ENCODE measurements at regions of chr6 and their contacts with region 1.

Region 1: GRCh38 chr6:166989427-166990032 is 9.7 kb upstream of the CEP43 start:
- DNase-seq: peak; percentile 38
- H3K4me3 ChIP-seq: no peak overlapping the region
- H3K27ac ChIP-seq: no peak overlapping the region
- H3K4me1 ChIP-seq: no peaks in the 10 kb centered on the region
- H3K27me3 ChIP-seq: no peaks in the 10 kb centered on the region
- CTCF ChIP-seq: peak; percentile 24 to 34
- POLR2A ChIP-seq: no peak

Region 2: GRCh38 chr6:165478201-165478980 is 1511.1 kb before region 1 on chr6:
- CTCF ChIA-PET with region 1: no interaction called
- POLR2A ChIA-PET with region 1: no interaction called
- dilution Hi-C with region 1: no loop called
- intact Hi-C with region 1: no loop called
- DNase-seq: no peak
- H3K4me3 ChIP-seq: no peak overlapping the region
- H3K27ac ChIP-seq: no peak overlapping the region
- H3K4me1 ChIP-seq: no peaks in the 10 kb centered on the region
- H3K27me3 ChIP-seq: no peaks in the 10 kb centered on the region
- CTCF ChIP-seq: no peak
- POLR2A ChIP-seq: no peak

Region 3: DNA sequence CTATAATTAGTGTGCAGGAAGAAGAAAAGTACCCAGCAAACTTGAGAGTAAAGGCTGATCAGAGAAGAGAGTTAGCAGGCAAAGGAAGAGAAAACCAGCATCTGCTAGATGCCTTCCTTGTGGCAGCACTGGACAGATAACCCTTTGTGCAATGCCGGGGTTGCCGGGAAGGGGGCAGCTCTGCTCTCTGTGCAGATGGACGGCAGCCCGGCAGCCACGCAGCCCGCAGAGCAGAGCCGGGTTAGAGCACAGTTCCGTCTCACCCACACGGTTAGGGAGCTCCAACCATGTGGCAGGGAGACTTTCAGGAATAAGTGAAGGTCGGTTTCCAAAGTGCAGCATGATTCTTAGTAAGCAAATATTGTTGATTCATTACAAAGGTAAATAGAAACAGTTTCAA is 282.5 kb before region 1 on chr6:
- CTCF ChIA-PET with region 1: interaction called, 4 read pairs
- POLR2A ChIA-PET with region 1: no interaction called
- dilution Hi-C with region 1: no loop called
- intact Hi-C with region 1: loop called (anchors 1 kb)
- DNase-seq: peak; percentile 54
- H3K4me3 ChIP-seq: no peak overlapping the region
- H3K27ac ChIP-seq: no peak overlapping the region
- H3K4me1 ChIP-seq: no peaks in the 10 kb centered on the region
- H3K27me3 ChIP-seq: peaks cover 8% of the 10 kb centered on the region in 2 experiments
- CTCF ChIP-seq: peak; percentile 27 to 76
- POLR2A ChIP-seq: no peak

Region 4: DNA sequence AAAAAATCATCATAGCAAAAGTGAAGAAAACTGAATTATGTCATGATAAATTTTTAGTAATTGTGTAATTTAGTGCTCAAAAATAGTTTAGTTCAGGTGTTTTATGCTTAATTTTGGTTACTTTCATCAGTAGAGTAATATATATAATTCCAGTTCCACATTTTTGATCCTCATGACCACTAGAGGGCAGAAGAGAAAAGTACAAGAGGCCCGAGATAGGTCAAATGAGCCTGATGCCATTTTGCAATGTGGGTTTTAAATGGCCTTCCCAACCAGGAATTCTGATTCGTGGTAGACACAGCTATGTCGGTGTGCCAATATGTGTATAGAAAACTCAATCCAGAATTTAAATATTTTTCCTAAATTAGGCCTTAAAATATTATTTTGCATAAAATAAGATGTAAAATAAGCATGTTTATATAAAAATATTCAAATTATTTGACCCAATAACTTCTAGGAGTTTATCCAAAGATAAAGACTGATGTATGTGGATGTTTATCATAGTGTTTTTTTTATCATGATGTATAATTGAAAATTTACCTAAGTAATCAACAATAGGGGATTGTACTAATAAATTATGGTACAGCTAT is 202.7 kb before region 1 on chr6:
- CTCF ChIA-PET with region 1: interaction called, 84 read pairs
- POLR2A ChIA-PET with region 1: no interaction called
- dilution Hi-C with region 1: no loop called
- intact Hi-C with region 1: loop called (anchors 1 kb)
- DNase-seq: peak; percentile 61
- H3K4me3 ChIP-seq: no peak overlapping the region
- H3K27ac ChIP-seq: no peak overlapping the region
- H3K4me1 ChIP-seq: no peaks in the 10 kb centered on the region
- H3K27me3 ChIP-seq: no peaks in the 10 kb centered on the region
- CTCF ChIP-seq: peak; percentile 49 to 50
- POLR2A ChIP-seq: no peak

Region 5: DNA sequence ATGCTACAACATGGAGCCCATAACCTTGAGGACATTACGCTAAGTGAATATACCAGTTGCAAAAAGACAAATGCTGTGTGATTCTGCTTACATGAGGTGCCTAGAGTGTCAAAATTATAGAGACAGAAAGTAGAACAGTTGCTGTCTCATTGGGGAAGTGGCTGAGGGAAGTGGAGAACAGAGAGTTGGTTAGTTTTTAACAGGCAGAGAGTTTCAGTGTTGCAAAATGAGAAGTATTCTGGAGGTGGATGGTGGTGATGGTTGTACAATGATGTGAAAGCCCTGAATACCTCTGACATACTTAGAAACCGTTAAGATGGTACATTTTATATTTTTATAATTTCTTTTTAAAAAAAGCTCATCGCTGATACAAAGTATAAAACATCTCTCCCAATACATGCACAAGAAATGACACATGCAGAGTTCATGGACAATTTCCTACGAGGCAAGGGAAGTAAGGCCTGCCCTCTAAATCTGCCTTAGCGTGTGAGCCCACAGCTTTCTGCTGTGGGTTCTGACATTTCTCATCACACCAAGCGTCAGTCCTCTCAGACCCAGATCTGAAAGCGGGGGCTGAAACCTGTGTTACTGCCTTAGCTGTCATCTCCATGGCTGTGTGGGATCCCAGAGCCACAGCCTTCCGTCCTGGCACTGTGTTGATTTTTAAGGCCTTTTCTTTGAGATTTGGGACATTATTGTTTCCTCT is 159.2 kb before region 1 on chr6:
- CTCF ChIA-PET with region 1: no interaction called
- POLR2A ChIA-PET with region 1: no interaction called
- dilution Hi-C with region 1: no loop called
- intact Hi-C with region 1: no loop called
- DNase-seq: no peak
- H3K4me3 ChIP-seq: no peak overlapping the region
- H3K27ac ChIP-seq: no peak overlapping the region
- H3K4me1 ChIP-seq: no peaks in the 10 kb centered on the region
- H3K27me3 ChIP-seq: no peaks in the 10 kb centered on the region
- CTCF ChIP-seq: no peak
- POLR2A ChIP-seq: no peak

Region 6: GRCh38 chr6:166950443-166950821 is 39.1 kb before region 1 on chr6:
- CTCF ChIA-PET with region 1: interaction called, 23 read pairs
- POLR2A ChIA-PET with region 1: no interaction called
- dilution Hi-C with region 1: no loop called
- intact Hi-C with region 1: no loop called
- DNase-seq: no peak
- H3K4me3 ChIP-seq: no peak overlapping the region
- H3K27ac ChIP-seq: no peak overlapping the region
- H3K4me1 ChIP-seq: peaks cover 2% of the 10 kb centered on the region
- H3K27me3 ChIP-seq: no peaks in the 10 kb centered on the region
- CTCF ChIP-seq: no peak
- POLR2A ChIP-seq: no peak

Region 7: DNA sequence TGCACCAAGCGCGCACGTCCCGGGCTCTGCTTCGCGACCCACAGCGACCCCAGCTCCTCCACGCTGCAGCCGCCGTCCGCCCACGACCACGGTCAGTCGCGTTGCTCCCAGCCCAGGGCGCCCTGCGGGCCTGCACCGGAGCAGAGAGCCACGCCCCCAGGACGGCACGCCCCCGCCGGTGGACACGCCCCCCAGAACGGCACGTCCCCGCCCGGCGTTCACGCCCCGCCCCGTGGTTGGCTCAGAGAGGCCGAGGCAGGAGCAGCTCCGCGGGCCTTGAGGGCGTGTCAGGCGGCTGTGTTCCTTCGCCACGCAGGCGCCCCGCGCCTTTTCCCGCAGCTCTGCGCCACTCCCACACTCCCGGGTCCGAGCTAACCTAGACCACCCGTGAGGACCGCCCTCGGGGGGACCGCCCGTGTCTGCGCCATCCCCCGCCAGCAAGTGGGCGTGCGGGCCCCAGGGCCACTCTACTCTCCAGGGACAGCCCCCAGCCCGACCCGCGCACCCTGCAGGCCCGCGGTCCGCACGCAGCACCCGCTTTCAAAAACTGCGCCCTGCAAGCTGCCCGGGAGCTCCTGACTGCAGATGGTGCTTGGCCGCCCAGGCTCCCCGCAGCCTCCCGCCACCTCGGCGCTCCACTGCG is 33.0 kb before region 1 on chr6 and contains the start of gene RNASET2:
- CTCF ChIA-PET with region 1: interaction called, 23 read pairs
- POLR2A ChIA-PET with region 1: no interaction called
- dilution Hi-C with region 1: no loop called
- intact Hi-C with region 1: no loop called
- DNase-seq: peak; percentile 91
- H3K4me3 ChIP-seq: peak within 1 kb of the TSS; percentile 60 to 63 (median 61)
- H3K27ac ChIP-seq: no peak within 1 kb of the TSS
- H3K4me1 ChIP-seq: peaks cover 21% of the 10 kb centered on the region
- H3K27me3 ChIP-seq: no peaks in the 10 kb centered on the region
- CTCF ChIP-seq: no peak
- POLR2A ChIP-seq: peak; percentile 20
- total RNA-seq, gene RNASET2: 10.0 and 10.7 TPM in 2 replicates

Region 8: DNA sequence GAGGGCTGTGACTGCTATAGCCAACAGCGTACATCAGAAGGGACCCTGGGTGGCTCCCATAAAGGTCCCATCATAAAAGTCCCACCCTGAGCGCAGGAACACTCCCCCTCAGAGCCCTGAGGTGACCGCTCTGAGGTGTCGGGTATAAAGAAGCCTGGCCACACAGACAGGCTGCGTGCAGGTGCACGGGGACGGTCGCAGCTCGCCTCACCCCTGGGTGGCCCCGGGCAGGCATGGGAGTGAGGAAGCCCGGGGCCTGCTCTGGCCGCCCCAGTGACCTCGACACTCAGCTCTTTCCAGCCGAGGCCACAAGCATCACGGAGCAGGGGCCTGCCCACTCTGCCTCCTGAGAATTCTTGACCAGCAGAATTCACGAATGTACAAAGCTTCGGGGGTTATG is 18.8 kb before region 1 on chr6:
- CTCF ChIA-PET with region 1: interaction called, 73 read pairs
- POLR2A ChIA-PET with region 1: no interaction called
- dilution Hi-C with region 1: no loop called
- intact Hi-C with region 1: no loop called
- DNase-seq: no peak
- H3K4me3 ChIP-seq: no peak overlapping the region
- H3K27ac ChIP-seq: no peak overlapping the region
- H3K4me1 ChIP-seq: no peaks in the 10 kb centered on the region
- H3K27me3 ChIP-seq: no peaks in the 10 kb centered on the region
- CTCF ChIP-seq: no peak
- POLR2A ChIP-seq: no peak

Region 9: GRCh38 chr6:166977621-166978525 is 11.7 kb before region 1 on chr6:
- CTCF ChIA-PET with region 1: interaction called, 73 read pairs
- POLR2A ChIA-PET with region 1: no interaction called
- dilution Hi-C with region 1: no loop called
- intact Hi-C with region 1: no loop called
- DNase-seq: peak; percentile 33
- H3K4me3 ChIP-seq: no peak overlapping the region
- H3K27ac ChIP-seq: no peak overlapping the region
- H3K4me1 ChIP-seq: peaks cover 9% of the 10 kb centered on the region
- H3K27me3 ChIP-seq: no peaks in the 10 kb centered on the region
- CTCF ChIP-seq: no peak
- POLR2A ChIP-seq: no peak

Region 10: GRCh38 chr6:167722634-167723309 is 733.2 kb after region 1 on chr6:
- CTCF ChIA-PET with region 1: no interaction called
- POLR2A ChIA-PET with region 1: no interaction called
- dilution Hi-C with region 1: no loop called
- intact Hi-C with region 1: no loop called
- DNase-seq: no peak
- H3K4me3 ChIP-seq: no peak overlapping the region
- H3K27ac ChIP-seq: no peak overlapping the region
- H3K4me1 ChIP-seq: no peaks in the 10 kb centered on the region
- H3K27me3 ChIP-seq: no peaks in the 10 kb centered on the region
- CTCF ChIP-seq: no peak
- POLR2A ChIP-seq: no peak

Measured in endothelial cell of umbilical vein (primary cell).